Left colon (tissue), 2 donors: ENCODE measurements at regions of chr3 and their contacts with region 1.

Region 1: DNA sequence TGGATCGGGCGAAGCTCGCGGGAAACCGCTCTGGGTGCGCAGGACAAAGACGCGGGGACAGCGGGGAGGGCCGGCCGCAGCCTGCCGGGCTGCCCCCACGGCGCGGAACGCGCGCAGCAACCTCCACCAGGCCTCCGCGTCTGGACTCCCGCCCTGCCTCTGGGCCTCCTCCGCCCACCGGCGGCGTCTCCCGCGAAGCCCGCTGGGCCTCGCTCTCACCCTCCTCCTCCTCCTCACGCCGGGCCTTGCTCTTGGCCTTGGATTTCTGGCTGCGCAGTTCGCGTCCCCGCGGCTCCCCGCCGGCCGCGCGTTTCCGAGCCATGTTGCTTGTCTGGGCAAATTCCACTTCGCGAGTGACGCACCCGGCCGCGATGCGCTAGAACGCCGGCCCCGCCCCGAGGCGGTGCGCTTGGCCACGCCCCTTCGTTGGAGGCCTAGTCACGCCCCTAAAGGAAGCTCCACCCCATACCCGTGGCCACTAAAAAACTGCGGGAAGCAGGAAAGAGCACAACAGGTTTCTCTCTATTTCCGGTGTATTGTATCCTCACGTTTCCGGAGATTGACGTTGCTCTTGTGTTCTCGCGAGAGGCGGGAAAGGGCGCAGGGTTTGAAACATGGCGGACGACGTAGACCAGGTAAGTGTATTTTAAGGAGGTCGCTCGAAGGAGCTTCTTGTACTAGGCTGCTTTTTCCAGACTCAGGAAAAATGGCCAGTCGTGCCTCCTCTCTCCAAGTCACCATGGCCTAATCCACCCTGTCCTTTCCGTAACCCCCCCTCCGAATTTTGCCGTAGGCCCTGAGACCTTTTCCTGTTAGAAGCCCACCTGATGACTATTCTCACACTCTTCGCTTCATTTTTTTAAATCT is at the starts of genes LSM3 and XPC:
- DNase-seq: peak; percentile 96 to 98
- ATAC-seq: peak; percentile 98
- total RNA-seq, gene LSM3: 9.1 to 9.9 TPM
- total RNA-seq, gene XPC: 19.7 to 22.4 TPM

Region 2: DNA sequence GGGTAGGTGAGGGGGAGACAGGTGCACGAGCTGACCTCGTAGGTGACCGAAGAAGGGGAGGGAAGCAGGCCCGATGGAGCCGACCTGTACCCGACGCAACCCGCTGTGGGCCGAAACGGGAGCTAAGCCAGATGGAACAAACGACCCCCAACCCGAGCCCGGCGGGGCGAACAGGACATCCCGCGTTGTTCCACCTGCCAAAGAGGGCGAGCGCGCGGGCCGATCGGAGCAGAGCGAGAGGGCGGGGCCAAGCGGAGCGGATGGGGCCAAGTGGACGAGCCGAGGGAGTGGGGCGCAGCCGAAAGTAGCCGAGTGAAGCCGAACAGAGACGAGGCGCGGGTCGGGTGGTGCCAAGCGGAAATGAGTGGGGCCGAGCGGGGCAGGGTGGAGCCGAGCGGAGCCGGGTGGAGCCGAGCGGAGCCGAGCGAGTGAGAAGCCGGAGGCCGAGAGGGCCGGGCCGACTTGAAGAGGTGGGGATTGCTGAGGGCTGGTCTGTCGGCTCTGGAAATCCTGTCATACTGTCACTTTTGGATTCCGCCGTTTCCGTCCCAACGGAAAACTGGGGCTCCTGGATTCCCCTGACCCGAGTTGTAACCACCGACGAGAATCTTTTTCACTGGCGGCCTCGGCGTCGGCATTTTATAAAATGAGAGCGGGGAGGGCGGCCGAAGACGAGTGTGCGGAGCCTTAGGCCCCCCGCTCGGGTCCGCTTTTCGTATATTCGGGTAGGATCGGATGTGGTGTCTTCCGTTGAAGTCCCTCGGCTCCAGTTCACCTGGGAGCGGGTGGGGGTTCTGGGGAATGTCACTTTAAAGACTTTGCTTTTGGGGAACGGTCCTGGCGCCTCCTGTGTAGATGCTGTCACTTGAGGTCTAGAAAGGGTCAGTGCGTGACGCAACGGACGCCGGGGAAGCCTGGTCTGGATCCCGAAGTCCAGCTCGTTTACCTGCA is 283.1 kb before region 1 on chr3:
- intact Hi-C with region 1: loop called in 1 of 2 experiments (anchors 10 kb)
- DNase-seq: peak; percentile 95 to 97
- ATAC-seq: peak; percentile 98

Region 3: DNA sequence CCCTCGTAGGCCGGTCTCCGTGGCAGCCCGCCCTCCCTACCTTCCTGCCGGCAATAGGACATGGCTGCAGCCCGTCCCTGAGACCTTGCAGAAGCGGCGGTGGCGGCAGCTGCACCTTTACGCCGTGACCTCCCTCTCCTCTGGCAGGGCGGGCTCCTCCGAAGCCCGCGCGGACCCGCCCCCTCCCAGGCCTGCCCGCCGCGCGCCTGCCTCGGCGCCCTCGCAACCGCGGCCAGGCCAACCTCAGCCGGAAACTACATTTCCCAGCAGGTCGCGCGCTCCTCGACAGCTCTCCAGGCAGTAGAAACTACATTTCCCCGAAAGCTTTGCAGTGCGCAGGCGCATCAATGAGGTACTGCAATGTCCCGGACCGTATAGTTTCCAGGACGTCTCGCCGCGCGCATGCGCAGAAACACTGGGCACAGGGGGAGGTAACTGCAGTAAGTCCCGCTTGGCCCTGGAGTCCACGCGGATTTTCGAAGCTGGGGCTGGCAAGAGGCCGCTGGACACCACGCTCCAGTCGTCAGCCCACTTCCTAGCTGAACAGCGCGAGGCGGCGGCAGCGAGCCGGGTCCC is 53.8 kb before region 1 on chr3 and contains the starts of genes CHCHD4 and TMEM43:
- intact Hi-C with region 1: loop called in 1 of 2 experiments (anchors 5 kb)
- DNase-seq: peak; percentile 99 to 100
- ATAC-seq: peak; percentile 85
- total RNA-seq, gene CHCHD4: 17.6 to 18.9 TPM
- total RNA-seq, gene TMEM43: 25.3 to 29.2 TPM

Region 4: DNA sequence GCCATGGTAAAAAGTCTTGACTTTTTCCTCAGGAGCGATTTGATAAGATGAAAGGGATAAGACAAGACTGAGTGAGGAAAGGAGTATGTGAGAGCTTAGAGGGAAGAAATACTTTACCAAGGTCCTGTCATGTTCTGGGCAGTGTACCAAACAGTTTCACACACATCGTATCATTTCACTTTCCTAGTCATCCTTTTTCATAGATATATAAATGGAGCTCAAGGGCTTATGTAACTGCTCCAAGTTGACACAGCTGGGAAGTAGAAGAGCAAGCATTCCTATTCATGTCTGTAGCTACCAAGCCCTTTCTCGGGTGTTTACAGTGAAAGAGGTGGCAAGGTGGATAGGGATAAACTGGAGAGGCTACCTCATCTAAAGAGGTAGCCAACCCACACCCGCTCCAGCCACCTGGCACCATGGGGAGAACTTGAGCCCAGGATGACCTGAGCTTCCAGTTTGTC is 829.2 kb after region 1 on chr3:
- intact Hi-C with region 1: no loop called
- DNase-seq: no peak
- ATAC-seq: no peak